H1 (cell line): ENCODE measurements at regions of chr1 and their contacts with region 1.

Region 1: DNA sequence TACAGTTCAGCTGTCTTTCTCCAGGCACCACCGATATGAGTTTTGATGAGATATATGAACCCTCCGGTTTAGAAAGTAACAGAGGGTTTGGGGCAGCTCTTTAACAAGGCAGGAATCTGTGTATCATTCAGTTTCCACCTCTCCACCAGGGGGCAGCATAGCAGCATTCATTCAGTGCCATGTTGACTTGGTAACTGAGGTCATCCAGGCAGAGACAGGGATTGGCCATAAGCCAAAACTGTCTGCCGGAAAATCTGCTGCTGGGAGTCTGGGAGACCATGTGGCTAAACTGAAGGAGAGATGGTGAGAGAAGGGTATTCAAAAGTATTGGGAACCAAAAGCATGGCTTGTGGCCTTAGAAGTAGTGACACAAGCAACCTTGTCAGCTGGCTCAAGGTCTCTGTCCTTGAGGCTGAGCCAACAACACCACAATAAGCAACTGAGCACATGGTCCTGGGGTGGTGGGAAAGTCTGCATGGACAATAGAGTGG is 98.5 kb downstream of the LMX1A start:
- DNase-seq: peak; percentile 61 to 90
- H3K4me3 ChIP-seq: no peak overlapping the region
- H3K27ac ChIP-seq: no peak overlapping the region
- H3K4me1 ChIP-seq: peaks cover 0 to 3% (median 1%) of the 10 kb centered on the region in 4 experiments; a peak in 2 of 7 replicates
- H3K27me3 ChIP-seq: peaks cover 0 to 3% (median 1%) of the 10 kb centered on the region in 4 experiments; a peak in 4 of 7 replicates
- CTCF ChIP-seq: peak; percentile 47 to 91 (median 88)
- EP300 ChIP-seq: no peak
- POLR2A ChIP-seq: no peak
- RAD21 ChIP-seq: peak; percentile 92 to 94

Region 2: DNA sequence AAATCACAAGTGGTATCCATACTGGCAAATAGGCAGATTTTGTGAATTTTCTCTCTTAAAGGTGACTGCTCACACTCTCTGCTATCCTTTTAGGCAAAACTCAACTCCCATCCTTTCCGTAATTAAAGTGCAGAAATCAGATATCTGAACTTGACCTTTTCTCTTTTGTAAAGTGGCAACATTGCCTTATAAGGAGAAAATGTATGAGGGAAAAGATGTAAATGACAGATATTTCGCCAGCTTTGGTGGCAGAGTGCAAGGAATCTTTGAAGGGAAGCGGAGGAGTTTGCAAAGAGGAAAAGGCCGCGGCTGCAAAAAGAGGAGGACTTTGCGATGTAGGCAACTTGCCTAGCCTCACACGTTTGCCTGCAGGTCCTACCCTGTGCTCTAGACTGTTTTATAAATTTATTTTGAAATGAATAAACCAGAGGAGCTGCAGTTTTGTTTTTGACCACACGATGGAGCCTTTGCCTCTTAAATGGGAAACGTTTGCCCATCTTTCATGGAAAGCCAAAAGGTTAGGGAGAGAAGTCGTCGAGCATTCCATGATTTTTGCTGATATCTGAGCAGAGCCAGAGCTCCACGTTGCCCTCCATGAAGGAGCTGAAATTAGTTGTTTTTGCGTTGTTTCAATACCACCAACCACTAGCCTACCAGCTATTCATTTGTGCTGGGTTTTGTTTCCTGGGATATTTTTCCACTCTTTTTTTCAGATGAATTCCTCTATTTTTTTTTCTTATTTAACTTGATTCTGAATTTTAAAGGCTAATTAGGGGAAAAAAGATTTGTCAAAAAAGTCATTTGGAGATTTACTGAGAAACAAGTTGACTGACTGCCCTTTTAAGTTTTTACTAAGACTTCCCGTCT is 143.8 kb before region 1 on chr1:
- CTCF ChIA-PET with region 1: interaction called, 17 read pairs
- POLR2A ChIA-PET with region 1: no interaction called
- DNase-seq: peak; percentile 47 to 84
- H3K4me3 ChIP-seq: no peak overlapping the region
- H3K27ac ChIP-seq: no peak overlapping the region
- H3K4me1 ChIP-seq: peaks cover 0 to 7% (median 3%) of the 10 kb centered on the region in 4 experiments; a peak in 4 of 7 replicates
- H3K27me3 ChIP-seq: peaks cover 20 to 42% (median 29%) of the 10 kb centered on the region in 4 experiments
- CTCF ChIP-seq: peak in 2 of 3 experiments; percentile 72; a peak in 3 of 4 replicates
- EP300 ChIP-seq: no peak
- POLR2A ChIP-seq: no peak
- RAD21 ChIP-seq: peak; percentile 81 to 88

Region 3: GRCh38 chr1:165144757-165145397 is 113.1 kb before region 1 on chr1:
- CTCF ChIA-PET with region 1: interaction called, 42 read pairs
- POLR2A ChIA-PET with region 1: no interaction called
- DNase-seq: peak; percentile 36 to 80
- H3K4me3 ChIP-seq: no peak overlapping the region
- H3K27ac ChIP-seq: no peak overlapping the region
- H3K4me1 ChIP-seq: no peaks in the 10 kb centered on the region
- H3K27me3 ChIP-seq: peaks cover 0 to 2% (median 1%) of the 10 kb centered on the region in 4 experiments; a peak in 3 of 7 replicates
- CTCF ChIP-seq: peak; percentile 51 to 84 (median 83)
- EP300 ChIP-seq: no peak
- POLR2A ChIP-seq: no peak
- RAD21 ChIP-seq: peak; percentile 81 to 89

Region 4: GRCh38 chr1:165240492-165240891 is 17.5 kb before region 1 on chr1:
- CTCF ChIA-PET with region 1: interaction called, 30 read pairs
- POLR2A ChIA-PET with region 1: no interaction called
- DNase-seq: no peak
- H3K4me3 ChIP-seq: no peak overlapping the region
- H3K27ac ChIP-seq: no peak overlapping the region
- H3K4me1 ChIP-seq: peaks cover 0 to 3% (median 3%) of the 10 kb centered on the region in 4 experiments; a peak in 3 of 7 replicates
- H3K27me3 ChIP-seq: peaks cover 3 to 25% (median 19%) of the 10 kb centered on the region in 4 experiments
- CTCF ChIP-seq: no peak
- EP300 ChIP-seq: no peak
- POLR2A ChIP-seq: no peak
- RAD21 ChIP-seq: no peak

Region 5: DNA sequence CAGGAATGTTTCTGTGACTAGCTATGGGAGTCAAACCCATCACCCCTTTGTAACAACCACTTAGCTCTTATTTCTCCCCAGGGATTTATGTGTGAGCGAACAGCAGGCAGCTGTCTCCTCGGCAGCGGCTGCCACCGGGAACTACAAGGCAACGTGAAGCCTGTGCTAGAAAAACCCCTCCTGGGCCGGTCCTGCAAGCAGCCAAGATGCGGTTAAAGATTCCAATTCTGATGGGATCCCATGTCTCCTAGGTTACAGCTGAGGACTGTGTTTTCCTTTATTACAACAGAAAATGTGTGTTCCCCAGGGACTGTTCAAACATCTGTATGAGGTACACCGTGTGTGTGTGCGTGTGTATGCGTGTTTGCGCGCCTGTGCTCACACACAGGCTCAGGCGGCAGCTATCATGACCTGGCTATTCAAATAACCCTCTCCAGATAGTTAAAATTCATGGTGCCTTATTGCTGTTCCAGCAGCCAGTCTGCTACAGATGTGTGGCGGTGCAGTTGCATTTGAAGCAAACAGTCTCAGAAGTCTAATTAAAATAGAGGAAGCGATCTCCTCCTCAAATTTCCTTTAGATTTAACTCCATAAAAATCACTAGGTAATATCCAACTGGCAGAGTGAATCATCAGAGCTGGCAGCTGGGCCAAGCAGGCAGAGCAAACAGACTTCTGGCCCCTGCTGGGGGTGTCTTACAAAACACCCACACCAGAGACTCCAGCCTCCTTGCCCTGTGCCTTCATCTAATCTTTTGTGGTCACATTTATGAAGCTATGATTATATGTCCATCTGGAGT is 30.5 kb after region 1 on chr1:
- CTCF ChIA-PET with region 1: interaction called, 51 read pairs
- POLR2A ChIA-PET with region 1: no interaction called
- DNase-seq: no peak
- H3K4me3 ChIP-seq: no peak overlapping the region
- H3K27ac ChIP-seq: no peak overlapping the region
- H3K4me1 ChIP-seq: peaks cover 0 to 3% (median 2%) of the 10 kb centered on the region in 4 experiments; a peak in 4 of 7 replicates
- H3K27me3 ChIP-seq: no peaks in the 10 kb centered on the region; a peak in 1 of 7 replicates
- CTCF ChIP-seq: no peak
- EP300 ChIP-seq: no peak
- POLR2A ChIP-seq: no peak
- RAD21 ChIP-seq: no peak

Region 6: GRCh38 chr1:165342587-165342986 is 84.6 kb after region 1 on chr1:
- CTCF ChIA-PET with region 1: interaction called, 12 read pairs
- POLR2A ChIA-PET with region 1: no interaction called
- DNase-seq: no peak
- H3K4me3 ChIP-seq: no peak overlapping the region
- H3K27ac ChIP-seq: no peak overlapping the region
- H3K4me1 ChIP-seq: peaks cover 0 to 4% (median under 1%) of the 10 kb centered on the region in 4 experiments; a peak in 2 of 7 replicates
- H3K27me3 ChIP-seq: peaks cover 0 to 2% (median under 1%) of the 10 kb centered on the region in 4 experiments; a peak in 2 of 7 replicates
- CTCF ChIP-seq: no peak
- EP300 ChIP-seq: no peak
- POLR2A ChIP-seq: no peak
- RAD21 ChIP-seq: no peak

Region 7: GRCh38 chr1:165376041-165376810 is 118.2 kb after region 1 on chr1:
- CTCF ChIA-PET with region 1: interaction called, 138 read pairs
- POLR2A ChIA-PET with region 1: interaction called, 4 read pairs
- DNase-seq: peak in 1 of 2 experiments; percentile 87
- H3K4me3 ChIP-seq: peak overlapping the region; percentile 57 to 74 (median 71)
- H3K27ac ChIP-seq: no peak overlapping the region
- H3K4me1 ChIP-seq: peaks cover 0 to 10% (median 0%) of the 10 kb centered on the region in 4 experiments; a peak in 2 of 7 replicates
- H3K27me3 ChIP-seq: peaks cover 0 to 30% (median 16%) of the 10 kb centered on the region in 4 experiments; a peak in 6 of 7 replicates
- CTCF ChIP-seq: no peak
- EP300 ChIP-seq: no peak
- POLR2A ChIP-seq: no peak; a peak in 1 of 3 replicates
- RAD21 ChIP-seq: no peak